GM10248 (cell line): ENCODE measurements at regions of chr11 and their contacts with region 1.

Region 1: DNA sequence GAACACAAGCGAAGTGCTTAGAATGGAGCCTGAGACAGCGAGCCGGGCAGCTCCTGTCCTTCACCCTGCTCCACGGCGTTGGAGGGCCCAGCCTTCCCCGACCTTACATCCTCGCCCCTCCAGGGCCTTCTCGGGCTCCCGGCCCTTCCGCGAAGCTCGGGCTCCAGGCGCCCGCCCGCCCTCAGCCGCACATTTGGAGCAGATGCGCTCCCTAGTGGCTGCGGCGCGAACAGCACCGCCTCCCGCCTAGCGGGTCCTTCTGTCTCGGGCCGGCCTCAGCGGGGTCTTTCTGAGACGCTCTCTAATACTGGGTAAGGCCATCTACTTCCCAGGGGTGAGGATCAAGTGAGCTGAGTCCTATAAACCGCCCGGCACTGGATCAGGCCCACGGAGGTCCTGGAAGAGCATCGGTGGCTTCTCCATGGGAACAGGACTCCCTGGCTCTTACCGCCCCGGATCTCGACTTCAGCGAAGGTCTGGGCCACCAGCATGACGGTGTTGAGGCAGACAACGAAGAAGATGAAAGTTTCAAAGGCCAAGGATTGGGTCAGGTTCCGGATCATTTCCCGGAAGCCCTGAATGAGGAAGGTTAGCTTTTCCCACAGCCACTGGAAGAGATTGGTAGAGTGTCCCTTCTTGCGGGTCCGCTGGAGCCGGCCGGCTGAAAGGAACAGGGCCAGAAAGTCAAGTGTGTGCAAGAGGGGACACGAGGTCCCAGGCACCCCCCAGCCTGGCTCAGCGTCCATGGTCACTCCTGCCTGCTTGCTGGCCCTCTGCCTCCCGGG is 3.7 kb downstream of the CATSPER1 start:
- DNase-seq: peak; percentile 92
- CTCF ChIP-seq: peak; percentile 97

Region 2: DNA sequence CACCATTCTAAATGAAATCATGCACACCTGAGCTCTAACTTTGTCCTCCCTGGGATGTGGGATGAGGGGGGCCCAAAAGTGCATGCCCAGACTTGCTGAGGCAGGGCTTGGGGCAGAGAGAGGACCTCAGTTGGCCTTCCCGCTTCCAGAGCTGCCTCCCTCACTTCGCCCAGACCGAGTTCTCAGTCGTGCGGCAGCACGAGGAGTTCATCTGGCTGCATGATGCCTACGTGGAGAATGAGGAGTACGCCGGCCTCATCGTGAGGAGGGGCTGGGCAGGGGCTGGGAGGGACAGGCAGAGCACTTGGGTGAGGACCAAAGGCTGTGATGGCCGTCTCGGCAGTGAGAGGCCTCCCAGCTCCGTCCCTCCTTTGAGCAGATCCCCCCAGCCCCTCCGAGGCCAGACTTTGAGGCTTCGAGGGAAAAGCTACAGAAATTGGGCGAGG is 172.8 kb before region 1 on chr11:
- CTCF ChIA-PET with region 1: no interaction called
- POLR2A ChIA-PET with region 1: no interaction called
- DNase-seq: no peak
- CTCF ChIP-seq: no peak

Region 3: DNA sequence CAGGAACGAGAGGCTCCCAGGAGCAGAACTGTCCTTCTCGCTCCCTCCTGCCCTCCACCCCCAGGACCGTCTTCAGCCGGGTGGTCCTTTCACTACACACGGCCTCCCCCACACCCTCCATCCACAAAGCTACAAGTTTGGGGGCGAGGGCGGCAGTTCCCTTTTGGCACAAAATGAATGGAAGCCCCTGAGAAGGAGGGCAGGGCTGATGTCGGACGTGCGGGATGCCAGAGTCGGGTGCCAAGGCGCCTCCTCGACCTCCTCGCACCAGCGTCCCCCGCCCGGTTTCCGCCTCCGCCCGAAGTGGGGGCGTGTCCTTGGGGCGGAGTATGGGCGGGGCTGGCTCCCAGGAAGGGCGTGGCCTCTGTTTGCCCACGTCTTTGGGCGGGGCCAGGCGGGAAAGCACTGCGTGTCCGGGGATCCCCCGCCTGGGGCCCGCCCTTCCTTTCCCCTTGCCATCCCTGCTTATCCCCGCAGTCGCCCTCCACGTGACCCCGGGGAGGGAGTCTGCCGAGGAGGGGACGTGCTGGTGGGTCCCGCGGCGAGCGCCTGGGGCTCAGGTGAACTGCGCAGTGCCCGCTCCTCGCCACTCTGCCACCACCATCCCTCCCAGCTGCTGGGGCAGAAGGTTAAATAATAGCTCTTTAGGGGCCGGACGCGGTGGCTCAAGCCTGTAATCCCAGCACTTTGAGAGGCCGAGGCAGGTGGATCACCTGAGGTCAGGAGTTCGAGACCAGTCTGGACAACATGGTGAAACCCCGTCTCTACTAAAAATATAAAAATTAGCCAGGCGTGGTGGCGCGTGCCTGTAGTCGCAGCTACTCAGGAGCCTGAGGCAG is 149.1 kb before region 1 on chr11:
- CTCF ChIA-PET with region 1: interaction called, 10 read pairs
- POLR2A ChIA-PET with region 1: no interaction called
- DNase-seq: peak; percentile 97
- CTCF ChIP-seq: no peak

Region 4: DNA sequence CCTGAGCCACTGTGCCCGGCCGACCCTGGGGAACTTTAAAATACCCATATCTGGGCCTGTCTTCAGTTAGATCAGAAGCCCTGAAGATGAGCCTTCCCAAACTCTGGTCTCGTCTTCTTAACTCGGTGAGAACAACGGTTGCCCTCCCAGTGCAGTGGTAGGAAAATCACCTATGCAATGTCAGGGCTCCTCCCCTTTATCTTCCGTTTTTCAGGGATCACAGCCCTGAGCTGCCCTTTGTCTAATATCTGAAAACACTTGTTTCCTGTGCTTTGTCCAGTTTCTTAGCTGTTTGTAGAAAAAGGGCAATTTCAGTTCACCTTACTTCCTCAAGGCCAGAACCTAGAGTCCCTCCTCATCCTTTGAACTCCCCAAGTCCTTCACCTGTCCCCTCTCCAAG is 93.9 kb before region 1 on chr11:
- CTCF ChIA-PET with region 1: no interaction called
- POLR2A ChIA-PET with region 1: no interaction called
- DNase-seq: no peak
- CTCF ChIP-seq: no peak

Region 5: GRCh38 chr11:65945430-65945911 is 77.1 kb before region 1 on chr11 and contains the start of gene TSGA10IP:
- CTCF ChIA-PET with region 1: no interaction called
- POLR2A ChIA-PET with region 1: no interaction called
- DNase-seq: no peak
- CTCF ChIP-seq: no peak

Region 6: DNA sequence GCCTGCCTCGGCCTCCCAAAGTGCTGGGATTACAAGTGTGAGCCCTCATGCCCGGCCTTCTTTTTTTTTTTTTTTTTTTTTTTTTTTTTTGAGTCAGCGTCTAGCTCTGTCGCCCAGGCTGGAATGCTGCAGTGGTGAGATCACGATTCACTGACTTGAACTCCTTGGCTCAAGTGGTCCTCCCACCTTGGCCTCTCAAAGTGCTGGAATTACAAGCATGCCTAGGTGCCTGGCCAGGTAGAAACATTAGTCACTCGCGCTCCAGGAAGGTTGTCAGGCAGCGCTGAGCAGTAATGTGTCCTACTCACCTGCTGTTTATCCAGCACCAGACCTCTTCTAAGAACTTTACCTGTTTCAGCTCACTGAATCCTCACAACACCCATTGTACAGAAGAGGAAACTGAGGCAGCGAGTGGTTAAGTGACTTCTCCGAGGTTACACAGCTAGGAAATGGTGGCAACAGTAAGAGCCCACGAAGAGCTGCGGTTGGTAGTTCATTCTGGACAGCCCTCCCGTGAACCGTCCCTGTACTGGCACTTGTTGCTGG is 11.3 kb before region 1 on chr11:
- CTCF ChIA-PET with region 1: interaction called, 67 read pairs
- POLR2A ChIA-PET with region 1: interaction called, 4 read pairs
- DNase-seq: no peak
- CTCF ChIP-seq: no peak

Region 7: GRCh38 chr11:66045177-66045639 is 22.6 kb after region 1 on chr11:
- CTCF ChIA-PET with region 1: interaction called, 52 read pairs
- POLR2A ChIA-PET with region 1: no interaction called
- DNase-seq: peak; percentile 91
- CTCF ChIP-seq: peak; percentile 92

Region 8: DNA sequence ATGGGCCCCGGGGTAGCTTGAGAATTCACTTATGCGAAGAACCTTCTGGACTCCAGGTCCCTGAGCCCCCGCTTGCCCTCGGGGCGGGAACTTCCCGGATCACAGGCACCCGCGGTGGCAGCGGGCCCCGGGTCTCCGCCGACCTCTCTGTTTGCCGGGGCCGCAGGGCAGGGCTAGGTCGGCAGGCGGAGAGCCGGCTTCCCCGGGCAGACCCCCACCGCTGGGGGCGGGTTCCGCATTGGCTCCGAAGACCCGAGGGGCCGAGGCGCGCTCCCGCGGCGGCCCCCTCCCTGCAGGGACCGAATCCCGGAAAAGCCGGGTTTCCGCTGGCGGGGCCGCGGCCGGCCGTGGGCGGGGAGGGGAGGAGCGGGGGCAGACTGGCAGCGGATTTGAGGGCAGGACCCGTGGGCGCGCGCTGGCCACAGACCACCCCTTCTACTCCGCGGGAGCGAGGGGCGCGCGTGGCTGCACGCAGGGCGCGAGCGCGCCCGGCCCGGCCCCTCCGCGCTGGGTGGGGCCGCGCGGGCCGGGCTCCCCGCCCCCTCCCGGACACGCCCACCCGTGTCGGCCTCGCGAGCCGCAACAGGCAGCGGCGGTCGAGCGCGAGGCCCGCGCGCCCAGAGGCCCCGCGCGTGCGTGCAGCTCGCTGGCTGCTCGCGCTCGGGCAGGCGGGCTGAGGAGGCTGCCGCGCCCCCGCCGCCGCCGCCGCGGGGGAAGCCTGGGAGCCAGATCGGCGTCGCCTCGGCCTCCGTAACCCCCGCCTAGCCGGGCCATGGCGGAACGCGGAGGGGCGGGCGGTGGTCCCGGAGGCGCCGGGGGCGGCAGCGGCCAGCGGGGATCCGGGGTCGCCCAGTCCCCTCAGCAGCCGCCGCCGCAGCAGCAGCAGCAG is 47.4 kb after region 1 on chr11 and contains the start of gene PACS1:
- CTCF ChIA-PET with region 1: interaction called, 10 read pairs
- POLR2A ChIA-PET with region 1: no interaction called
- DNase-seq: peak; percentile 90
- CTCF ChIP-seq: no peak

Region 9: DNA sequence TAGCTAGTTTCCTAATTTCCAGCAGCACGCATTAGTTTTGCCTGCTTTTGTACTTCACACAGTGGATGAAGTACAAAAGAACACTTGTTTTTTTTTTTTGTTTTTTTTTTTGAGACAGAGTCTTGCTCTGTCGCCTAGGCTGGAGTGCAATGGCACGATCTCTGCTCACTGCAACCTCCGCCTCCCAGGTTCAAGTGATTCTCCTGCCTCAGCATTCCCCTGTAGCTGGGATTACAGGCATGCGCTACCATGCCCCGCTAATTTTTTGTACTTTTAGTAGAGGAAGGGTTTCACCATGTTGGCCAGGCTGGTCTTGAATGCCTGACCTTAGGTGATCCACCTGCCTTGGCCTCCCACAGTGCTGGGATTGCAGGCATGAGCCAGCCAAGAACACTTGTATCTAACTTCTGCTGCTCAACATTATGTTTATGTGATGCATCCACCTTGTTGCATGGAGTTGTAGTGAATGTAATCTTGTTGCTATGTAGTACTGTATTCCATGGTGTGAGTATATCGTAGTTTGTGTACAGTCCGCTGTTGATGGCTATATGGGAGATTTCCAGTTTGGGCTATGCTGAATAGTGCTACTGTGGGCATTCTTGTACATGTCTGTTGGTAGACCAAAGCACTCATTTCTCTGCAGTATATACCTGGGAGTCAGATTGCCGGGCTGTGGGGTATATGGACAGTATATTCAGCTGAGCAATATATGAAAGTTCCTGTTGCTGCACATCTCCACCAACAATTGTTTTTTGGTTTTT is 64.7 kb after region 1 on chr11:
- CTCF ChIA-PET with region 1: no interaction called
- POLR2A ChIA-PET with region 1: no interaction called
- DNase-seq: no peak
- CTCF ChIP-seq: no peak